Activated CD4-positive, alpha-beta memory T cell treated with anti-CD3 and anti-CD28 coated beads for 36 hours (primary cell): ENCODE measurements at regions of chr17 and their contacts with region 1.

Region 1: GRCh38 chr17:30336369-30337171 is 2.7 kb upstream of the TMIGD1 start:
- DNase-seq: peak; percentile 68
- H3K4me3 Mint-ChIP-seq: peak overlapping the region; percentile 13
- H3K27ac Mint-ChIP-seq: no peak overlapping the region
- H3K4me1 Mint-ChIP-seq: peaks cover 37% of the 10 kb centered on the region
- H3K27me3 Mint-ChIP-seq: no peaks in the 10 kb centered on the region

Region 2: GRCh38 chr17:30116661-30117551 is 219.7 kb before region 1 on chr17 and contains the start of gene NSRP1:
- CTCF ChIA-PET with region 1: interaction called, 10 read pairs
- POLR2A ChIA-PET with region 1: interaction called, 6 read pairs
- intact Hi-C with region 1: loop called (anchors 1 kb)
- DNase-seq: peak; percentile 97
- H3K4me3 Mint-ChIP-seq: peak within 1 kb of the TSS; percentile 96
- H3K27ac Mint-ChIP-seq: peak within 1 kb of the TSS; percentile 99
- H3K4me1 Mint-ChIP-seq: peaks cover 41% of the 10 kb centered on the region
- H3K27me3 Mint-ChIP-seq: no peaks in the 10 kb centered on the region
- total RNA-seq, gene NSRP1: 24.3 to 26.5 TPM

Region 3: GRCh38 chr17:30236766-30237165 is 99.8 kb before region 1 on chr17:
- CTCF ChIA-PET with region 1: interaction called, 20 read pairs
- POLR2A ChIA-PET with region 1: no interaction called
- intact Hi-C with region 1: loop called (anchors 10 kb)
- DNase-seq: peak; percentile 49
- H3K4me3 Mint-ChIP-seq: peak overlapping the region; percentile 27
- H3K27ac Mint-ChIP-seq: no peak overlapping the region
- H3K4me1 Mint-ChIP-seq: peaks cover 16% of the 10 kb centered on the region
- H3K27me3 Mint-ChIP-seq: peaks cover 60% of the 10 kb centered on the region

Region 4: GRCh38 chr17:30291543-30292285 is 44.9 kb before region 1 on chr17 and contains the start of gene BLMH:
- CTCF ChIA-PET with region 1: interaction called, 40 read pairs
- POLR2A ChIA-PET with region 1: interaction called, 12 read pairs
- intact Hi-C with region 1: loop called (anchors 1 kb)
- DNase-seq: peak; percentile 90
- H3K4me3 Mint-ChIP-seq: peak within 1 kb of the TSS; percentile 92
- H3K27ac Mint-ChIP-seq: peak within 1 kb of the TSS; percentile 87
- H3K4me1 Mint-ChIP-seq: peaks cover 14% of the 10 kb centered on the region
- H3K27me3 Mint-ChIP-seq: no peaks in the 10 kb centered on the region
- total RNA-seq, gene BLMH: 47.0 to 49.6 TPM

Region 5: DNA sequence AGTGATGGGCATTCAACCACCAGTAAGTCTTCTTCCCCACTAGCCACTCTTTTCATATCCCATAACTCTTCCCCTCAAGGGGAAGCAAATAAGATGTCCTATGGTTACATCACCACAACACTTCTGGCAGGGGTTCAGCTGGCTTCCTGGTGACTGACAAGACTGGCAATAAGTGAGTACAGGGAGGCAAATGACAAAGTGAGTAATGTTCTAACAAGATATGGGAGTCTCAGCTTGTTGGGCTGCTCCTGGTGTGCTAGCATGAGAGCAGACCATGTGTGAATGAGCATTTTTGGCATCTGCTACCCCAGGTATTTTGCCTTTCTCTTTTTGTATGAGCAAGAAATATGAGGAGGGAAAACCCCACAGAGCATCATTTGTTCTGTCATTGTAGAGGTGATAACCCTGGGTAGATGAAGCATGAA is 12.7 kb before region 1 on chr17:
- CTCF ChIA-PET with region 1: interaction called, 22 read pairs
- POLR2A ChIA-PET with region 1: no interaction called
- intact Hi-C with region 1: loop called (anchors 1 kb)
- DNase-seq: peak; percentile 70
- H3K4me3 Mint-ChIP-seq: no peak overlapping the region
- H3K27ac Mint-ChIP-seq: peak overlapping the region; percentile 72
- H3K4me1 Mint-ChIP-seq: peaks cover 34% of the 10 kb centered on the region
- H3K27me3 Mint-ChIP-seq: no peaks in the 10 kb centered on the region

Region 6: DNA sequence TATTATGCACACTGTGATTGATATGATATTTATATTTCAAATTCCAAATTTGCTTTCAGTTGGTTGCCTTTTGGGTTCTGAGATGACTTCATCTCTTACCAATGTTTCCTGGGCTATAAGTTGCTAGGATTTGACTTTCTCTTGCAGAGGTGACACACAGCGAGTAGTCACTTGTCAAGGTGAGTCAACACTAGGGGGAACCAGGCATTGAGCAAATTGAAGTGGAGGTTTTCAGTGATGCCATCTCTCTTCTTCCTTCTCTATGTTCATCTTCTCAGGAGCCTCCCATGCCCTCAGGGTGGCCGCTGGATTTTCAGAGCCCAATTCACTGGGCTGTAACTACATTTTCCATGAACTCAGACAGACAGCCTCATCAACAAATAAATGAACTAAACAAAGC is 36.2 kb after region 1 on chr17:
- CTCF ChIA-PET with region 1: interaction called, 15 read pairs
- POLR2A ChIA-PET with region 1: interaction called, 4 read pairs
- intact Hi-C with region 1: loop called (anchors 2 kb)
- DNase-seq: peak; percentile 62
- H3K4me3 Mint-ChIP-seq: no peak overlapping the region
- H3K27ac Mint-ChIP-seq: no peak overlapping the region
- H3K4me1 Mint-ChIP-seq: peaks cover 50% of the 10 kb centered on the region
- H3K27me3 Mint-ChIP-seq: no peaks in the 10 kb centered on the region

Region 7: GRCh38 chr17:30429155-30429554 is 92.6 kb after region 1 on chr17:
- CTCF ChIA-PET with region 1: no interaction called
- POLR2A ChIA-PET with region 1: no interaction called
- intact Hi-C with region 1: no loop called
- DNase-seq: no peak
- H3K4me3 Mint-ChIP-seq: no peak overlapping the region
- H3K27ac Mint-ChIP-seq: no peak overlapping the region
- H3K4me1 Mint-ChIP-seq: peaks cover 2% of the 10 kb centered on the region
- H3K27me3 Mint-ChIP-seq: no peaks in the 10 kb centered on the region